ENCODE measurements at regions of chr1 and their contacts with region 1.

Region 1: GRCh38 chr1:151175910-151176309 is at the start of gene TMOD4:
- DNase-seq: no peak
- H3K4me3 ChIP-seq: no peak within 1 kb of the TSS
- H3K27ac ChIP-seq: no peak within 1 kb of the TSS
- H3K4me1 ChIP-seq: no peaks in the 10 kb centered on the region
- H3K27me3 ChIP-seq: no peaks in the 10 kb centered on the region
- CTCF ChIP-seq: peak; percentile 37 to 67 (median 47)
- EP300 ChIP-seq: no peak
- POLR2A ChIP-seq: no peak
- RAD21 ChIP-seq: peak; percentile 15 to 31; a peak in 1 of 4 replicates
- total RNA-seq, gene TMOD4: not detected in 2 replicates

Region 2: DNA sequence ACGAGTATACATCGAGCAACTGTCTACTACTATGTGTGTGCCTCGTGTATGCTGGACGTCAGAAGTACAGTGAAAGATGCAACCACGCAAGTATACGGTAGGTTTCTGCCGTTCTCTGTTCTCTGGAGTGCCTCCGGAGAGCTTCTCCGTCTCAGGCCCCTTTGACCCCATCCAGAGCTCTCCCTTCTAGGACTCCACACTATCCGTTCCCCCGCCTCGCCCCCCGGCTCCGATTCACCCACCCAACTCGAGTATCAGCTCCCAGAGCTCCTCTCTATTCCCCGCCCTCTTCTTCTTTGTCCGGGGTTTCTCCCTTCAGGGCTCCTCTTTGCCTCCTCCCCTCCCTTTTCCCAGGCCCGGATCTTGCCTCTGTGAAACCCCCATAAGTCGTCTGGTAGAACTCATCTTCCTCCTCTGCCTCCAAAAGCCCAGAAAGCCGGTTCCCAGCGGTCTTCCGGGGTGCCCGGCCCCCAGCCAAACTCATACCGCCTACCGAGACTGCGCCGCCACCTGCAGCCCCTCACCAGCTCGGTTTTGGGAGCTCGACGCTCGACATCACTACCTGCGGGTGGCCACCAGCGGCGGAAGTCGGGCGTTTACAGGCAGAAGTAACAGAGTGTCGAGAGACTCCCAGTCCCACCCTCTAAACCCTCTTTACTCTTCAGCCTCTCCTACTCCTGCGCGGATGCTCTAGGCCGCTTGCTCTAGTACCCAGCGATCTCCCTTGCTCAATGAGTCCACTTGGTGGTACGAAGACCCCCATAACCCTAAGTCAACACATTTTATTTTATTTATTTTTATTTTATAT is 13.9 kb after region 1 on chr1 and contains the start of gene VPS72:
- CTCF ChIA-PET with region 1: interaction called, 9 read pairs
- POLR2A ChIA-PET with region 1: interaction called, 13 read pairs
- DNase-seq: peak; percentile 60 to 86
- H3K4me3 ChIP-seq: peak within 1 kb of the TSS; percentile 70 to 98 (median 95)
- H3K27ac ChIP-seq: peak within 1 kb of the TSS; percentile 71
- H3K4me1 ChIP-seq: no peaks in the 10 kb centered on the region
- H3K27me3 ChIP-seq: no peaks in the 10 kb centered on the region
- CTCF ChIP-seq: no peak
- EP300 ChIP-seq: peak in 1 of 2 experiments; percentile 72; a peak in 2 of 3 replicates
- POLR2A ChIP-seq: peak; percentile 75 to 89
- RAD21 ChIP-seq: no peak
- total RNA-seq, gene VPS72: 114 and 121 TPM in 2 replicates

Region 3: DNA sequence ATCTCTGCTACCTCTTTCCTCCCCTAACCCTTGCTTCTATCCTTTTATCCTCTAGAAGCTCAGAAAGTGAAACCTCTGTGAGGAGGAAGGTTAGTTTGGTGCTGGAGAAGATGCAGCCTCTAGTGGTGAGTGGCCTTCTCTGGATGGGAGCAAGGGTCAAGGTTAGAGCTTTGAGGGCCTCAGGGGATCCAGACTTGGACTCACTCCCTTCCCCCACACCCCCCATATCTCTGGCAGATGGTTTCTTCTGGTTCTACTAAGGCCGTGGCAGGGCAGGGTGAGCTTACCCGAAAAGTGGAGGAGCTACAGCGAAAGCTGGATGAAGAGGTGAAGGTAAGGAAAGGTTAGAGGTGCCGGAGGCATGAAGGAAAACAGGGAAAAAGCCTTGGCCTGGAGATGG is 344.4 kb after region 1 on chr1:
- CTCF ChIA-PET with region 1: no interaction called
- POLR2A ChIA-PET with region 1: no interaction called
- DNase-seq: no peak
- H3K4me3 ChIP-seq: no peak overlapping the region
- H3K27ac ChIP-seq: no peak overlapping the region
- H3K4me1 ChIP-seq: peaks cover 1 to 7% (median 3%) of the 10 kb centered on the region in 4 experiments; a peak in 3 of 7 replicates
- H3K27me3 ChIP-seq: no peaks in the 10 kb centered on the region
- CTCF ChIP-seq: no peak
- EP300 ChIP-seq: no peak
- POLR2A ChIP-seq: no peak
- RAD21 ChIP-seq: no peak; a peak in 1 of 4 replicates